Naive thymus-derived CD4-positive, alpha-beta T cell (primary cell): ENCODE measurements at regions of chr3 and their contacts with region 1.

Region 1: DNA sequence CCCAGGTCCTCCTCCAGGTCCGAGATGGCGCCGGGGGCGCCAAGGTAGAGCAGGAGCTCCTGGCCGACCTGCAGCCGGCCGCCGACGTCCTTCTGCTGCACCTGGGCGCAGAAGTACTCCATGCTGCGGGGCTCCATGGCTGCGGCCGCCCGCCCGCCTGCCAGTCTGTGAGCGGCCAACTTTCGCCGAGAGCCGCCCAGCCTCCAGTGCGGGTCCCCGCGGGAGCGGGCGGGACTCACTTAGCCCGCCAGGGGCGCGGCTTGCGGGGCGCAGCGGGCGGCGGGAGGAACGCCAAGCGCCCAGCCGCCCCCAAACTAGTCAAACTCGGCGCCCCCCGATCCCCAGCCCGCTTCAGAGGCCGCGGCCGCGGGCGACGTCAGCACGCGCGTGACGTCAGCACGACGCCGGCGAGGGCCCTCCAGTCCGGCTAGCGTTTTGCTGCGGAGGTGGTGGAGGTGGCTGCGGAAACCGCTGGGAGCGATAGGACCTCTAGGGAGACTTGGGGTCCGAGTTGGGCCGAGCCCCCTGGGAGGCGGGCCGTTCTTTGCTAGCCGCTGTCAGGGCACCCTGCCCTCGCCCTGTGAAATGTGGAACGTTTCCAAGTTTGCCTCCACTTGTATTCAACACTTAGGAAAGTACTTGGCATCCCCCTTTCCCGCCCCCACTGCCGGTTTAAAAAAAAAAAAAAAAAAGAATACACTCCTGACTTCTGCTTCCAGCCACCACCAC is at the start of gene CLASP2:
- DNase-seq: peak; percentile 77 to 89 (median 86)
- ATAC-seq: peak; percentile 90
- H3K4me3 ChIP-seq: peak within 1 kb of the TSS; percentile 81
- H3K4me3 Mint-ChIP-seq: peak within 1 kb of the TSS in 5 of 10 donors; percentile 89 to 99 (median 97)
- H3K27ac ChIP-seq: peak within 1 kb of the TSS; percentile 91
- H3K27ac Mint-ChIP-seq: peak within 1 kb of the TSS in 7 of 9 donors; percentile 90 to 100 (median 97)
- H3K4me1 ChIP-seq: peaks cover 11 to 17% of the 10 kb centered on the region in 2 donors
- H3K4me1 Mint-ChIP-seq: peaks cover 0 to 17% (median 11%) of the 10 kb centered on the region in 7 donors
- H3K27me3 ChIP-seq: no peaks in the 10 kb centered on the region
- H3K27me3 Mint-ChIP-seq: peaks cover 0 to 10% (median 0%) of the 10 kb centered on the region in 5 donors
- total RNA-seq, gene CLASP2: 44.2 to 83.8 (median 79.2) TPM

Region 2: DNA sequence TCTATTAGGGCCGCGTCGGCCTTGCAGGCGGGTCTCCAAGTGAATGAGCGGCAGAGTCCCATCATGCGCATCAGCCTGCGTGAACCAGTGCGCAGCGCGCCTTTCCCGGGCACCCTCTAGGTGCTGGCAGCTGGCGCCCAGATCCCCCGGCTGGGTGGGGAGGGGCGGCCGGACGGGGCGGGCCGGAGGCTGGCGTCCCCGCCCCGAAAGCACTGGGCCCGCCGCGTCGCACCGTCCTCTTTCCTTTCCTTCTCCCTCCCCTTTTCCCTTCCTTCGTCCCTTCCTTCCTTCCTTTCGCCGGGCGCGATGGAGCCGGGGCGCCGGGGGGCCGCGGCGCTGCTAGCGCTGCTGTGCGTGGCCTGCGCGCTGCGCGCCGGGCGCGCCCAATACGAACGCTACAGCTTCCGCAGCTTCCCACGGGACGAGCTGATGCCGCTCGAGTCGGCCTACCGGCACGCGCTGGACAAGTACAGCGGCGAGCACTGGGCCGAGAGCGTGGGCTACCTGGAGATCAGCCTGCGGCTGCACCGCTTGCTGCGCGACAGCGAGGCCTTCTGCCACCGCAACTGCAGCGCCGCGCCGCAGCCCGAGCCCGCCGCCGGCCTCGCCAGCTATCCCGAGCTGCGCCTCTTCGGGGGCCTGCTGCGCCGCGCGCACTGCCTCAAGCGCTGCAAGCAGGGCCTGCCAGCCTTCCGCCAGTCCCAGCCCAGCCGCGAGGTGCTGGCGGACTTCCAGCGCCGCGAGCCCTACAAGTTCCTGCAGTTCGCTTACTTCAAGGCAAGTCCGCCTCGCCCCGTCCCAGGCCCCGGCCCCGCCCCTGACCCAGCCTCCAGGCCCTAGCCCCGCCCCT is 604.0 kb before region 1 on chr3 and contains the start of gene CRTAP:
- CTCF ChIA-PET with region 1: no interaction called
- POLR2A ChIA-PET with region 1: no interaction called
- intact Hi-C with region 1: loop called (anchors 5 kb)
- DNase-seq: peak; percentile 69 to 86 (median 79)
- ATAC-seq: peak; percentile 92
- H3K4me3 ChIP-seq: peak within 1 kb of the TSS; percentile 82
- H3K4me3 Mint-ChIP-seq: peak within 1 kb of the TSS; percentile 88 to 95 (median 92)
- H3K27ac ChIP-seq: peak within 1 kb of the TSS; percentile 69
- H3K27ac Mint-ChIP-seq: peak within 1 kb of the TSS; percentile 75 to 91 (median 85)
- H3K4me1 ChIP-seq: peaks cover 17 to 23% of the 10 kb centered on the region in 2 donors
- H3K4me1 Mint-ChIP-seq: peaks cover 23 to 52% (median 37%) of the 10 kb centered on the region in 7 donors
- H3K27me3 ChIP-seq: no peaks in the 10 kb centered on the region
- H3K27me3 Mint-ChIP-seq: no peaks in the 10 kb centered on the region
- total RNA-seq, gene CRTAP: 27.1 to 86.1 (median 46.4) TPM

Region 3: GRCh38 chr3:33372218-33373081 is 345.6 kb before region 1 on chr3:
- CTCF ChIA-PET with region 1: interaction called, 3 read pairs
- POLR2A ChIA-PET with region 1: interaction called, 3 read pairs
- intact Hi-C with region 1: loop called (anchors 2 to 5 kb)
- DNase-seq: peak in 8 of 9 donors; percentile 14 to 57 (median 38)
- ATAC-seq: peak; percentile 80
- H3K4me3 ChIP-seq: no peak overlapping the region
- H3K4me3 Mint-ChIP-seq: no peak overlapping the region
- H3K27ac ChIP-seq: no peak overlapping the region
- H3K27ac Mint-ChIP-seq: no peak overlapping the region
- H3K4me1 ChIP-seq: peaks cover 0 to 4% of the 10 kb centered on the region in 2 donors
- H3K4me1 Mint-ChIP-seq: peaks cover 2 to 8% (median 6%) of the 10 kb centered on the region in 7 donors
- H3K27me3 ChIP-seq: peaks cover 0 to 6% of the 10 kb centered on the region in 2 donors
- H3K27me3 Mint-ChIP-seq: peaks cover 12 to 32% (median 22%) of the 10 kb centered on the region in 5 donors

Region 4: DNA sequence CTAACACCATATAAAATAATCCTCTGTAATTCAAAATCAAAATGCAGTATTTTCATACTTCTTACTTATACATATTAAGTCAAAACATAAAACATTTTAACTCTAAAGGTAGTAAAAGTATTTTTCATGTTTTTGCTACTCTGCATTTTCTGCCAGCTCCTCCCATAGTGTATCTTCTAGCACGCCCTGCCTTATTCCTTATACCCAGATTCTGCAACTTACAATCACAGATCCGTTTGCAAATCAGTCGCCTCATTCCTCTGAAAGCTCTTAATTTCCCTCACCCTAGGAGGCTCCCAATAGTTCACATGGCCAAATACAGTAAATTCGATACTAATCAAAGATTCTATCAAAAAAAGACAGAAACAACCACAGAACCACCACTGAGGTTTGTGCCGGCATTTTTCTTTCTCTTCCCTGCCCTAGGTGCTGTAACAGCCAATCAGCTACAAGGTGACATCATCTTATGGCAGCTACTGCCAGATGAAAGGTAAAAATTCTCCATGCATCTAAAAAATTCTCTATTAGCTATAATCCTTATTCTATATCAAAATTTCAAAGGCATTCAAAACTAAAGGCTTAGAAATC is 72.9 kb before region 1 on chr3:
- CTCF ChIA-PET with region 1: no interaction called
- POLR2A ChIA-PET with region 1: no interaction called
- intact Hi-C with region 1: loop called in 1 of 2 experiments (anchors 2 kb)
- DNase-seq: peak in 7 of 9 donors; percentile 26 to 59 (median 41)
- ATAC-seq: peak; percentile 93
- H3K4me3 ChIP-seq: peak overlapping the region; percentile 38
- H3K4me3 Mint-ChIP-seq: peak overlapping the region; percentile 55 to 90 (median 81)
- H3K27ac ChIP-seq: peak overlapping the region; percentile 29
- H3K27ac Mint-ChIP-seq: peak overlapping the region in 7 of 9 donors; percentile 6 to 75 (median 35)
- H3K4me1 ChIP-seq: peaks cover 0 to 7% of the 10 kb centered on the region in 2 donors
- H3K4me1 Mint-ChIP-seq: peaks cover 11 to 26% (median 11%) of the 10 kb centered on the region in 7 donors
- H3K27me3 ChIP-seq: no peaks in the 10 kb centered on the region
- H3K27me3 Mint-ChIP-seq: no peaks in the 10 kb centered on the region

Region 5: GRCh38 chr3:33787328-33788009 is 69.4 kb after region 1 on chr3:
- CTCF ChIA-PET with region 1: interaction called, 5 read pairs
- POLR2A ChIA-PET with region 1: no interaction called
- intact Hi-C with region 1: loop called (anchors 1 to 2 kb)
- DNase-seq: peak; percentile 16 to 71 (median 58)
- ATAC-seq: peak; percentile 83
- H3K4me3 ChIP-seq: no peak overlapping the region
- H3K4me3 Mint-ChIP-seq: peak overlapping the region in 7 of 10 donors; percentile 46 to 73 (median 62)
- H3K27ac ChIP-seq: no peak overlapping the region
- H3K27ac Mint-ChIP-seq: no peak overlapping the region
- H3K4me1 ChIP-seq: no peaks in the 10 kb centered on the region
- H3K4me1 Mint-ChIP-seq: peaks cover 0 to 9% (median 0%) of the 10 kb centered on the region in 7 donors
- H3K27me3 ChIP-seq: no peaks in the 10 kb centered on the region
- H3K27me3 Mint-ChIP-seq: peaks cover 5 to 24% (median 10%) of the 10 kb centered on the region in 5 donors

Region 6: GRCh38 chr3:33848624-33849347 is 130.8 kb after region 1 on chr3:
- CTCF ChIA-PET with region 1: no interaction called
- POLR2A ChIA-PET with region 1: no interaction called
- intact Hi-C with region 1: loop called in 1 of 2 experiments (anchors 5 kb)
- DNase-seq: peak in 7 of 9 donors; percentile 43 to 71 (median 63)
- ATAC-seq: peak; percentile 88
- H3K4me3 ChIP-seq: peak overlapping the region; percentile 31
- H3K4me3 Mint-ChIP-seq: peak overlapping the region; percentile 33 to 75 (median 60)
- H3K27ac ChIP-seq: peak overlapping the region; percentile 41
- H3K27ac Mint-ChIP-seq: peak overlapping the region; percentile 57 to 94 (median 83)
- H3K4me1 ChIP-seq: peaks cover 0 to 26% of the 10 kb centered on the region in 2 donors
- H3K4me1 Mint-ChIP-seq: peaks cover 19 to 64% (median 57%) of the 10 kb centered on the region in 7 donors
- H3K27me3 ChIP-seq: no peaks in the 10 kb centered on the region
- H3K27me3 Mint-ChIP-seq: no peaks in the 10 kb centered on the region